ENCODE measurements at regions of chr4 and their contacts with region 1.

Region 1: DNA sequence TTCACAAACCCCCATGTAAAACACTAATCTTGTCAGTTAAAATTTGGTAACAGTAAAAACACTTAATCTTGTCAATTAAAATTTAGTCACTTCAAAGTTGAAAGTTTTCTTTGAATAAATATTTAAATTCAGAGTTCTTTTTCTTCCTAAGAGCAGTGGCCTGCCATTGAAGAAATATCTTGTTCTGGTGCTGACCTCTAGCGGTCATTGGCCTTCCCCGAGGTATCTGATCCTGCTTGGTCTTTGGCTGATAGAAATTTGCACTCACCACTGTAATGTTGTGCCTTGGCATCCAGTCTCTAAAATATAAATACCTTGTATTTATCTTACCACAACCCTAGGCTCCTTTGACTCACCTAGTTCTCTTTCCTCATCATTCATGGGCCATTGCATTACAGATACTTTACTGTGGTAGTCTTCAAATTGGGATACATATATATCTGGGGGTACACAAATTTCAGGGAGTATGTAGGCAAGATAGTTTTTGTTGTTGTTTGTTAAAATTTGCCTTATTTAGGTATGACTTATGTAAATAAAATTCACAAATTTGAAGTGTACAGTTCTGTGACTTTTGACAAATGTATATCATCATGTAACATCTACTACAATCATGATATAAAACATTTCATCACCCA is 6.7 kb upstream of the ART3 start:
- DNase-seq: peak in 8 of 10 donors; percentile 46 to 88 (median 61)
- H3K4me3 ChIP-seq: no peak overlapping the region
- H3K27ac ChIP-seq: no peak overlapping the region
- H3K27me3 ChIP-seq: no peaks in the 10 kb centered on the region
- CTCF ChIP-seq: peak; percentile 74 to 98 (median 90)

Region 2: GRCh38 chr4:75916091-75916661 is 151.6 kb before region 1 on chr4:
- intact Hi-C with region 1: loop called in 1 of 2 experiments (anchors 5 kb)
- DNase-seq: peak in 1 of 10 donors; percentile 7
- H3K4me3 ChIP-seq: no peak overlapping the region
- H3K27ac ChIP-seq: peak overlapping the region in 5 of 59 donors; percentile 2 to 49 (median 20)
- H3K27me3 ChIP-seq: no peaks in the 10 kb centered on the region
- CTCF ChIP-seq: peak; percentile 49 to 93 (median 74)

Region 3: DNA sequence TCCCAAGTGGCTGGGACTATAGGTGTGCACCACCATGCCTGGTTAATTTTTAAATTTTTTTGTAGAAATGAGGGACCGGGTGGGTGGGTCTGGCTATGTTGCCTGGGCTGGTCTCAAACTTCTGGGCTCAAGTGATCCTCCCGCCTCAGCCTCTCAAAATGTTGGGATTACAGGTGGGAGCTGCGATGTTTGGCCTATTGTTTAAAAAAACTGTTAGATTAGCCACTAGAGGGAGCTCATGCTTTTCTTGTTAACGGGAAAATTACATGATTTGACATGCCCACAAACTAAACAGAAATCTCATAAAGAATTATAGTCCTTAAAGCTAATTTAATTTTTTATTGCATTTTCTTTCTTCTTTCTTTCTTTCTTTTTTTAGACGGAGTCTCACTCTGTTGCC is 72.0 kb before region 1 on chr4:
- intact Hi-C with region 1: loop called (anchors 1 to 5 kb)
- DNase-seq: no peak
- H3K4me3 ChIP-seq: no peak overlapping the region
- H3K27ac ChIP-seq: no peak overlapping the region
- H3K27me3 ChIP-seq: no peaks in the 10 kb centered on the region
- CTCF ChIP-seq: peak; percentile 71 to 92 (median 81)

Region 4: DNA sequence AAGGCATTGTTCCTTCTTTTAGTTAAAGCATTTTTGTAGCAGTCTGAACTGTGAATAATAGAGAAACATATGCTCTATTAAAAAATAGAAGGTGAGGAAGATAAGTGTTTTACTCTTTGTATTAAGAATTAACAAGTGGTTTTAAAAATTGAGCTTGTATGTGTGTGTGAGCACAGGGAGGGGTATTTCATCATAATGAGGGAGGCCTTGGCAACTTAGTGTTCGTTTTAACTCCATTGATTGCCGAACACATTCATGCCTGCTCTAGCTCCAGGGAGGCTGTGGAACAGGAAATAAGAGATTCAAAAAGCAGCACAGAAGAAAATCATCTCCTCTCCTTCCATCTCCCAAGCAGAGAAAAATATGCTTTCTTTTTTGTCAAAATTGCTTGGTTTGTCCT is 382.1 kb after region 1 on chr4:
- intact Hi-C with region 1: no loop called
- DNase-seq: no peak
- H3K4me3 ChIP-seq: peak overlapping the region in 1 of 59 donors; percentile 5
- H3K27ac ChIP-seq: peak overlapping the region in 38 of 59 donors; percentile 0 to 76 (median 42)
- H3K27me3 ChIP-seq: no peaks in the 10 kb centered on the region
- CTCF ChIP-seq: no peak